Esophagus squamous epithelium (tissue), 5 donors: ENCODE measurements at regions of chr3 and their contacts with region 1.

Region 1: GRCh38 chr3:184417619-184418327 is 37.9 kb downstream of the CHRD start:
- DNase-seq: no peak
- H3K4me3 ChIP-seq: no peak overlapping the region
- H3K27ac ChIP-seq: no peak overlapping the region
- H3K4me1 ChIP-seq: peaks cover 0 to 6% (median 0%) of the 10 kb centered on the region in 3 donors
- H3K27me3 ChIP-seq: no peaks in the 10 kb centered on the region
- CTCF ChIP-seq: peak; percentile 59 to 98 (median 92)
- POLR2A ChIP-seq: no peak

Region 2: GRCh38 chr3:184117636-184118035 is 300.1 kb before region 1 on chr3:
- intact Hi-C with region 1: no loop called
- DNase-seq: no peak
- H3K4me3 ChIP-seq: no peak overlapping the region
- H3K27ac ChIP-seq: no peak overlapping the region
- H3K4me1 ChIP-seq: no peaks in the 10 kb centered on the region
- H3K27me3 ChIP-seq: no peaks in the 10 kb centered on the region
- CTCF ChIP-seq: no peak
- POLR2A ChIP-seq: no peak

Region 3: GRCh38 chr3:184469423-184469822 is 51.6 kb after region 1 on chr3:
- intact Hi-C with region 1: loop called (anchors 5 kb)
- DNase-seq: no peak
- H3K4me3 ChIP-seq: no peak overlapping the region
- H3K27ac ChIP-seq: no peak overlapping the region
- H3K4me1 ChIP-seq: peaks cover 3 to 12% (median 8%) of the 10 kb centered on the region in 3 donors
- H3K27me3 ChIP-seq: peaks cover 0 to 19% (median 0%) of the 10 kb centered on the region in 4 donors
- CTCF ChIP-seq: peak in 5 of 6 experiments; percentile 65 to 93 (median 75)
- POLR2A ChIP-seq: no peak

Region 4: GRCh38 chr3:184543843-184544512 is 126.2 kb after region 1 on chr3:
- intact Hi-C with region 1: loop called (anchors 10 kb)
- DNase-seq: peak; percentile 18
- H3K4me3 ChIP-seq: peak overlapping the region in 1 of 4 donors; percentile 15
- H3K27ac ChIP-seq: no peak overlapping the region
- H3K4me1 ChIP-seq: peaks cover 0 to 8% (median 7%) of the 10 kb centered on the region in 3 donors
- H3K27me3 ChIP-seq: peaks cover 0 to 49% (median 0%) of the 10 kb centered on the region in 4 donors
- CTCF ChIP-seq: peak; percentile 80 to 95 (median 92)
- POLR2A ChIP-seq: no peak